Dendritic cell treated with granulocyte-macrophage colony-stimulating factor and Interleukin-4, amounts not matched to agents 40 ng/mL and 50 ng/mL, for 4 days (primary cell): ENCODE measurements at regions of chr5 and their contacts with region 1.

Region 1: GRCh38 chr5:74766849-74767578 is at the starts of genes GFM2 and NSA2:
- H3K4me3 Mint-ChIP-seq: peak within 1 kb of the TSS; percentile 100
- H3K27ac Mint-ChIP-seq: peak within 1 kb of the TSS; percentile 93
- H3K4me1 Mint-ChIP-seq: peaks cover 30% of the 10 kb centered on the region
- H3K27me3 Mint-ChIP-seq: no peaks in the 10 kb centered on the region

Region 2: GRCh38 chr5:73565139-73565968 is 1201.7 kb before region 1 on chr5 and contains the starts of genes ANKRA2 and UTP15:
- intact Hi-C with region 1: loop called (anchors 5 kb)
- H3K4me3 Mint-ChIP-seq: peak within 1 kb of the TSS; percentile 95
- H3K27ac Mint-ChIP-seq: peak within 1 kb of the TSS; percentile 96
- H3K4me1 Mint-ChIP-seq: peaks cover 16% of the 10 kb centered on the region
- H3K27me3 Mint-ChIP-seq: no peaks in the 10 kb centered on the region

Region 3: DNA sequence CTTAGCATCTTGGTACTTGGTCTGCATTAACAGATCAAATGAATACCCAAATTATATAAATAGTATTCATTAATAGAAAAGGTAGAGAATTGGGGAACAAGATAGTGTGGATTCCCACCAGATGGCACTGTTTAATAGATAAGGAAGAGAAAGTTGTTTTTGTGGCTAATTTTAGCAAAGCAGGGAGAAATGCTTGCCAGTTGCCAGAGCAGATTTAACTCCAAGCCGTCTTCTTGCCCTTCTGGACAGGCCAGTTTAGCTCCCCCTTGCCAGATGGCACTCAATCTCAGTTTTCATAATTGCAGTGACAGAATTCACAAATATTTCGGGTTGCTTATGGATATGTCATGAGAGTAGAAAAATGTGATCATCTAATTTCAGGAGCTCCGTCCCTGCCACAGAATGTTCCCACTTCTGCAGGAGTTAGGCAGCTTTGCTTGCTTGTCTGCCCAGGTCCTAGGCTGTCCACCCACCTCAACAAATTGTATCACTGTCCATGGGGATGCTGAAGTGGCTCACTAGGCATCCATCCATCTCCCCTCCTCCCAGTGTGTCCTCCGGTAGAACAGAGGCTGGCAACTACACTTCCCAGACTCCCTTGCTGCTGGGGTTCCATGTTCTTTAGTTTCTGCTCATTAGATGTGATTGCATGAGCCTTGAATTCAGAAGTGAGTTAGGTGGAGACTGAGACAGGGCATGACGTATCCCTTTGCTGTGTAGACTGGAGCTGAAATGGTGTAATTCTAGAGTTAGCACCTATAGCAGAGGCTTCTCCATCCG is 93.8 kb before region 1 on chr5:
- intact Hi-C with region 1: loop called (anchors 5 kb)
- H3K4me3 Mint-ChIP-seq: no peak overlapping the region
- H3K27ac Mint-ChIP-seq: no peak overlapping the region
- H3K4me1 Mint-ChIP-seq: peaks cover 29% of the 10 kb centered on the region
- H3K27me3 Mint-ChIP-seq: peaks cover 31% of the 10 kb centered on the region

Region 4: GRCh38 chr5:74684900-74685851 is 81.8 kb before region 1 on chr5 and contains the start of gene HEXB:
- intact Hi-C with region 1: loop called (anchors 2 kb)
- H3K4me3 Mint-ChIP-seq: peak within 1 kb of the TSS; percentile 83
- H3K27ac Mint-ChIP-seq: peak within 1 kb of the TSS; percentile 89
- H3K4me1 Mint-ChIP-seq: peaks cover 37% of the 10 kb centered on the region
- H3K27me3 Mint-ChIP-seq: peaks cover 16% of the 10 kb centered on the region

Region 5: DNA sequence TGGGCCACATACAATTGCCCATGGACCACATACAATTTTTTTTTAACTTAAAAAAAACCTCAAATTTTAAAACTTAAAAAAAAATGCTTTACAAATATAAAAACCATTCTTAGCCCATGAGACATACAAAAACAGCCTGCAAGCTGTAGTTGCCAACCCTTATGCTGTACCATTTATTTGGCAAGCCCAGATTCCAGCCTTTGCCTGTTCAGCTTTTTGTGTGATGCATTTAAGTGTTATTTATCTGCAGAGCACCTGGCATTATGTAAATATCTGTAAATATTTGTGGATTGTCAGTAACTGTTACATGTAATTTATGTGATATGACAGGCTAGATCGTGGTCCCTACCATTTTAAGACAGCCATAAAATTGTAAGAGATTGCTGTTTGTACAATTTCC is 49.4 kb before region 1 on chr5:
- intact Hi-C with region 1: no loop called
- H3K4me3 Mint-ChIP-seq: no peak overlapping the region
- H3K27ac Mint-ChIP-seq: no peak overlapping the region
- H3K4me1 Mint-ChIP-seq: no peaks in the 10 kb centered on the region
- H3K27me3 Mint-ChIP-seq: no peaks in the 10 kb centered on the region

Region 6: DNA sequence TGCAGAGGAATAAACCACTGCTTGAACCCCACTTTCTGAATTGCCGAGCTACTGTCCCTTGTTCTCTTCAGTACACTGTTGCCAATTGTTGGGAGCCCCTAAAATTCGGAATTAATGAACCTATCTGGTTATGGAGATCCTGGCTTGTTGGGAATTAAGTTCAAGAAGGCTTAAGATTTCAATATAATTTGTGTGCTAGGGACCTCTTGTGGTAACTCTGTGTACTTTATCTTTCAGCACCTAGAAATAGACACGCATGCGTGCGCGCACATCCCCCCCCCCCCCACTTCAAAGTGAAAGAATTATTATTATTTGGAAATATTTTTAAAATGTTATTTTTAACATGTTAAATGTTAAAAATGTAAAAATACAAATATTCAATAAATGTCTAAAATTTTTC is 152.5 kb after region 1 on chr5:
- intact Hi-C with region 1: loop called (anchors 1 kb)
- H3K4me3 Mint-ChIP-seq: no peak overlapping the region
- H3K27ac Mint-ChIP-seq: no peak overlapping the region
- H3K4me1 Mint-ChIP-seq: no peaks in the 10 kb centered on the region
- H3K27me3 Mint-ChIP-seq: peaks cover 2% of the 10 kb centered on the region